Activated CD8-positive, alpha-beta T cell treated with anti-CD3 and anti-CD28 coated beads for 36 hours (primary cell): ENCODE measurements at regions of chr9 and their contacts with region 1.

Region 1: DNA sequence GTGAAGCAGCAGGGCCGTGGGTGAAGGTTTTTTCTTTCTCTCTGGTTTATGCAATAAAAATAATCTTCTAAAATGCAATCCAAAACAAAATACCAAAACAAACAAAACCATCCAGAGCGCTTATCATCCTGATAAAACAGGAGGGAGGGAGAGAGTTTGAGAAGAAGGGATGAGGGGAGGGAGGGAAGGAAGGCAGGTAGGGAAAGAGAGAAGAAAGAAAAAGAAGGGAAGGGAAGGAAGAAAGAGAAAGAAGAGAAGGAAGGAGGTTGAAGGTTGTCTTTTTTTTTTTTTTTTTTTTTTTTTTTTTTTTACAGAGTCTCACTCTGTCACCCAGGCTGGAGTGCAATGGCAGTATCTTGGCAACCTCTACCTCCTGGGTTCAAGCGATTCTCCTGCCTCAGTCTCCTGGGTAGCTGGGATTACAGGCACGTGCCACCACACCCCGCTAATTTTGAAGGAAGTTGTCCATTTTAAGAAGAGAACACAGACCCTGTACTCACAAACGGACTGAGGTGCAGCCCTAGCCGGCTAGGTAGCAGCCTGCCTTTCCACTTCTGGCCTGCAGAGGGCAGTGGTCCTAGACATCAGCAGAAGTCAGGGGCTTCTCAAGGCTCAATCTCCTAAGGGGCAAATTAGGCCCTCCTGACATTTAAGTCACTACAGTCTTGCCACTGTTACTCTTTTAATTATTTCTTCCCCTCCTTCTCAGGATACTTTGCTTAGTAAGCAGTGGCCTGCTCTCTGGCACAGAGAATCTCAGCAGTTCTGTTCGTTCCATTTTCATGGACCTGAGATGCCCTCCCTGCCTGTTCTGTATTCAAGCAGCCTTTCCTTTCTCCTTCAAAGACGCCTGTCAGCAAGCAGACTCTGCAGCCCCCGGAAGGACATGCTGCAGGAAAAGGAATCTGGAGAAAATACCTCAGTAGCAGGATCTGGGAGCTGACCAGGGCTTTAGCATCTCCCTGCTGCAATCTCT is 76.4 kb downstream of the EPB41L4B start:
- DNase-seq: peak; percentile 85
- ATAC-seq: peak; percentile 94
- H3K4me3 Mint-ChIP-seq: no peak overlapping the region
- H3K27ac Mint-ChIP-seq: no peak overlapping the region
- H3K4me1 Mint-ChIP-seq: no peaks in the 10 kb centered on the region
- H3K27me3 Mint-ChIP-seq: peaks cover 19% of the 10 kb centered on the region
- CTCF ChIP-seq: peak; percentile 85

Region 2: GRCh38 chr9:109316207-109316640 is 71.8 kb after region 1 on chr9:
- CTCF ChIA-PET with region 1: interaction called, 6 read pairs
- POLR2A ChIA-PET with region 1: no interaction called
- intact Hi-C with region 1: loop called (anchors 5 kb)
- DNase-seq: no peak
- ATAC-seq: no peak
- H3K4me3 Mint-ChIP-seq: no peak overlapping the region
- H3K27ac Mint-ChIP-seq: no peak overlapping the region
- H3K4me1 Mint-ChIP-seq: peaks cover 15% of the 10 kb centered on the region
- H3K27me3 Mint-ChIP-seq: peaks cover 56% of the 10 kb centered on the region
- CTCF ChIP-seq: no peak